Testis (tissue), 5 donors: ENCODE measurements at regions of chr18 and their contacts with region 1.

Region 1: DNA sequence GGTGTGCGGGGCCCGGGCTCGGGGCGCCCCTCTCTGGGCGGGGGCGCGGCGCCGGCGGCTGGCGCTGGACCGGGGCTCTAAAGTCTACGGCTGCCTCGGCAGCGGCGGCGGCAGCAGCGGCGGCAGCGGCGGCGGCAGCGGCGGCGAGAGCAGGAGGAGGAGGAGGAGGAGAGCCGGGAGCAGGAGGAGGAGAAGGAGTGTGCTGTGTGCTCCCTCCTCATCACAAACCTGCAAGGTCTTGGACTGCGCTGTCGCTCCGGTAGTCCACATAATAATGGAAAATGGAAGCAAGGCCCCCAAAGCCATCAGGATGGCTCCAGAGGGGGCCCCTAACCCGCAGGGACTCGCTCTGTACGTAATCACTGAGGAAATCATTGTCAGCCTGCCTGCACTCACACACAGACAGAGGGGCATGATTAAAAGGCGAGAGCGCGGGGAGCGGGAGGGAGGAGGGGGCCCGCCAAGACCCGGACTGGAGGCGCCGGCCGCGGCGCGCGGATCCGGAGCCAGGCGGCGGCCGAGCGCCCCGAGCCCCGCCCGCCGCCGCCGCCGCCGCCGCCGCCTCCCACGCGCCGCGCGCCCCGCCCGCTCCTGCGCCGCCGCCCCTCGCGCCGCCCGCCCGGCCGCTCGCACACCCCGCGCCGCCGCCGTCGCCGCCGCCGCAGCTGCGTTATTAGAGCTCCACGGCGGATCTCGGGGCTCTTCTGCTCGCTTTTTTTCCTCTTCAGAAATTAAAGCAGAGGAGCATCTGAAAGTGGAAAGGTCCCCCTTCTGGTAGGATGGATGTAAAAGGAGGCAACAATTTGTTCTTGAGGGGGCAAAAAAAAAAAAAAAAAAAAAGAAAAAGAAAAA is at the start of gene ZNF521:
- DNase-seq: peak; percentile 84
- H3K4me3 ChIP-seq: peak within 1 kb of the TSS; percentile 74
- H3K27ac ChIP-seq: peak within 1 kb of the TSS; percentile 75 to 93
- H3K4me1 ChIP-seq: no peaks in the 10 kb centered on the region
- H3K27me3 ChIP-seq: no peaks in the 10 kb centered on the region
- CTCF ChIP-seq: peak in 2 of 3 experiments; percentile 1 to 8
- POLR2A ChIP-seq: no peak
- total RNA-seq, gene ZNF521: 34.7 to 46.9 TPM

Region 2: GRCh38 chr18:24987303-24988252 is 364.4 kb before region 1 on chr18:
- intact Hi-C with region 1: loop called (anchors 5 kb)
- DNase-seq: no peak
- H3K4me3 ChIP-seq: no peak overlapping the region
- H3K27ac ChIP-seq: no peak overlapping the region
- H3K4me1 ChIP-seq: no peaks in the 10 kb centered on the region
- H3K27me3 ChIP-seq: no peaks in the 10 kb centered on the region
- CTCF ChIP-seq: no peak
- POLR2A ChIP-seq: no peak

Region 3: DNA sequence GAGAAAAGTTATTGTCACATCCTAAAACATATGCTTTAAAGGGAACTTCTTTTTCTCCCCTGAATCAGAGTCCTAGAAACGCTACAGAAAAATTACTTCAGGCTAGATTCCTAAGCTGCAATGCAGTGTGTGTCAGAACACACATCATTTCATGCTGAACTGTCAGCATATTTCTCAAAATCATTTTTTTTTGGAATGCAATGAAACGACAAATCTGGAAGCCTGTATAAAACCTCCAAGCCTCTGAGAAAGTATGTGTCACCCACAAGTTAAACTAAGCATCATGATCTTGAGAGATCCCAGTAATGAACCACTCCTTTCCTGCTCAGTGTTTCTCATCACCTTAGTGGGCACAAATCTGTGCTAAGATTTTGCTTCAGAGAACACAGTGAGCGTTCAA is 276.2 kb before region 1 on chr18:
- intact Hi-C with region 1: no loop called
- DNase-seq: no peak
- H3K4me3 ChIP-seq: no peak overlapping the region
- H3K27ac ChIP-seq: no peak overlapping the region
- H3K4me1 ChIP-seq: no peaks in the 10 kb centered on the region
- H3K27me3 ChIP-seq: no peaks in the 10 kb centered on the region
- CTCF ChIP-seq: no peak
- POLR2A ChIP-seq: no peak